CD8-positive, alpha-beta T cell (primary cell): ENCODE measurements at regions of chr14 and their contacts with region 1.

Region 1: GRCh38 chr14:74618078-74618952 is 6.3 kb upstream of the LTBP2 start:
- DNase-seq: peak; percentile 46 to 95 (median 78)
- ATAC-seq: peak; percentile 83
- H3K4me3 ChIP-seq: peak overlapping the region; percentile 23 to 52
- H3K4me3 Mint-ChIP-seq: peak overlapping the region; percentile 73
- H3K27ac ChIP-seq: peak overlapping the region; percentile 57 to 72
- H3K27ac Mint-ChIP-seq: peak overlapping the region; percentile 93
- H3K4me1 ChIP-seq: peaks cover 50% of the 10 kb centered on the region
- H3K4me1 Mint-ChIP-seq: peaks cover 60% of the 10 kb centered on the region
- H3K27me3 ChIP-seq: no peaks in the 10 kb centered on the region
- H3K27me3 Mint-ChIP-seq: no peaks in the 10 kb centered on the region
- CTCF ChIP-seq: no peak

Region 2: DNA sequence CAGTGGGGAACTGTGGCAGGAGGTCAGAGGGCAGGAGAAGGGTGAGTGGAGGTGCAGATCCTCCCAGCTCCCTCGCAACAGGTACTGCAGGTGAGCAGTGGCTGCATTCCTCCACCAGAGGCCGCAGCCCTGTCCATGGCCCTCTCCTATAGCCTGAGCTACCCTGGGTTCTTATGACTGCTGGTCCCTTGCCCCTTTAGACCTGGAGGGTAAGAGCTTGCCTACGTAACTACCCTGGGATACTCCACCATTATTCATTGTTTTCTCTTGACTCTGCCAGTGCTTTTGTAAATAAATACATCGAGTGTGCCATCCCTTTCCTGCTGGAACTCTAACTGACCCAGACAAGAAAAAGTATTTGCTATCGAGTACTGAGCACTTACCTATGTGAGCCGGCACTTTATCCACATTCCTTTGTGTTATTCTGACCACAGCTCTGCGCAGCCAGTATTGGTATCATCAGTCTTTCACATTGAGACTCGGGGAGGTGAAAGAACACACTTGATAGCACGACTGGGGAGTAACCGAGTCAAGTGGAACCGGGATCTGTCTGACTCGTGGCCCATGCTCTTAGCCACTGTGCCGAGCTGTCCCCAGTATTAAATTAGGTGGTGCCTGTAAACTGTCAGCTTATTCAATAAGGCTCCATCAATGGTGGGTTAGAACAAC is 44.8 kb before region 1 on chr14:
- CTCF ChIA-PET with region 1: no interaction called
- POLR2A ChIA-PET with region 1: interaction called, 5 read pairs
- intact Hi-C with region 1: loop called in 1 of 2 experiments (anchors 1 kb)
- DNase-seq: no peak
- ATAC-seq: no peak
- H3K4me3 ChIP-seq: no peak overlapping the region
- H3K4me3 Mint-ChIP-seq: no peak overlapping the region
- H3K27ac ChIP-seq: no peak overlapping the region
- H3K27ac Mint-ChIP-seq: no peak overlapping the region
- H3K4me1 ChIP-seq: peaks cover 34% of the 10 kb centered on the region
- H3K4me1 Mint-ChIP-seq: peaks cover 37% of the 10 kb centered on the region
- H3K27me3 ChIP-seq: peaks cover 0 to 11% of the 10 kb centered on the region in 2 experiments
- H3K27me3 Mint-ChIP-seq: peaks cover 17% of the 10 kb centered on the region
- CTCF ChIP-seq: no peak

Region 3: DNA sequence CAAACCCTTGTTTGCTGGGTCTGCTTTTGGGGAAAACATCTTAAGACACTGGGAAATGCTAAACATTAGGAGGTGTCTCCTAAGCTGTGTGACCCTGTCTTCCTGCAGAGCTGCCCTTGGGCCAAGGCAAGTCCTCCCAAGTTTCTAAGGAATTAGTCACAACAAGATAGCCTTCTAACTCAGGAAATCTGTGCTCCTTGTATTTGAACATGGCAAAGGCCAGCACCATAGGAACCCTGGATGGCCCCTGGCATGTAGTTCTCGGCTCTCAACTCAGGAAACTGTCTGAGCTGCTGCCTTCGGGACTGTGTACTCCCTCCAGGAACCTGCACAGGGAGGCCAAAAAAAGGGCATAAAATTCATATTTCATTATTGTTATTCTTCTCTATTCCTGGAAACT is 31.4 kb after region 1 on chr14:
- CTCF ChIA-PET with region 1: no interaction called
- POLR2A ChIA-PET with region 1: interaction called, 9 read pairs
- intact Hi-C with region 1: loop called in 1 of 2 experiments (anchors 5 kb)
- DNase-seq: no peak
- ATAC-seq: no peak
- H3K4me3 ChIP-seq: no peak overlapping the region
- H3K4me3 Mint-ChIP-seq: no peak overlapping the region
- H3K27ac ChIP-seq: no peak overlapping the region
- H3K27ac Mint-ChIP-seq: no peak overlapping the region
- H3K4me1 ChIP-seq: no peaks in the 10 kb centered on the region
- H3K4me1 Mint-ChIP-seq: peaks cover 12% of the 10 kb centered on the region
- H3K27me3 ChIP-seq: no peaks in the 10 kb centered on the region
- H3K27me3 Mint-ChIP-seq: no peaks in the 10 kb centered on the region
- CTCF ChIP-seq: no peak

Region 4: GRCh38 chr14:74655599-74656389 is 37.5 kb after region 1 on chr14:
- CTCF ChIA-PET with region 1: interaction called, 5 read pairs
- POLR2A ChIA-PET with region 1: interaction called, 7 read pairs
- intact Hi-C with region 1: loop called (anchors 5 kb)
- DNase-seq: no peak
- ATAC-seq: no peak
- H3K4me3 ChIP-seq: no peak overlapping the region
- H3K4me3 Mint-ChIP-seq: no peak overlapping the region
- H3K27ac ChIP-seq: no peak overlapping the region
- H3K27ac Mint-ChIP-seq: peak overlapping the region; percentile 45
- H3K4me1 ChIP-seq: no peaks in the 10 kb centered on the region
- H3K4me1 Mint-ChIP-seq: peaks cover 9% of the 10 kb centered on the region
- H3K27me3 ChIP-seq: no peaks in the 10 kb centered on the region
- H3K27me3 Mint-ChIP-seq: no peaks in the 10 kb centered on the region
- CTCF ChIP-seq: no peak